ENCODE measurements at regions of chr5 and their contacts with region 1.

Region 1: DNA sequence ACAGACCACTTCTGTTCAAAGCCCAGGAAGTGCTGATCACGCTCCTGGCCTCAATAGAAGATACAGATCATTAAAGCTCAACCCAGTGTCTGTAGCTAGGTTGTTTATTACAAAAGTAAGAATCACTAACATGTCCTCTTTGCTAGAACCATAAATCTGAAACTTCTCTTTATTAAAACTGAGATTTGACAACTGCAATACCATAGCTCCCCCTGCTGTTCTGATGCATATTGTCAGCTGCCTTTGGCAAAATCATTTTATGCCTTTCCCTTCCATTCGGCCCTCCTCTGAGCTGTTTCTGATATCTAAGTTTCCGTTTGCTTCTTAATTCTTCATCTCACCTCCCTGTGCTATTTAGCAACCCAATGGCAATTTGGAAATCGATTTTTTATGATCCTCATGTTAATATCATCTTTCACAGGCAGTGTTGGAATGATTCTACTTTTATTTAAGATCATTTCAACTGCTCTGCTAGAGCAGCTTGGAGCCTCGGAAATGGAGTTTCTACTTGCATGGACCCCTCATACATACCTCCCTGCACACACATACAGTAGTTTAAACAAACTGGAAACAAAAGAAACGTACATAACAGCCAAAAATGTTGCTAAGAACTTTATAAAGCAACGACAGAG is 998.8 kb downstream of the MAT2B start:
- DNase-seq: peak; percentile 15 to 67 (median 26)
- ATAC-seq: peak; percentile 78
- H3K4me3 ChIP-seq: no peak overlapping the region
- H3K27ac ChIP-seq: no peak overlapping the region
- H3K4me1 ChIP-seq: no peaks in the 10 kb centered on the region
- H3K27me3 ChIP-seq: no peaks in the 10 kb centered on the region
- CTCF ChIP-seq: peak; percentile 61 to 88 (median 75)
- EP300 ChIP-seq: no peak
- POLR2A ChIP-seq: no peak
- RAD21 ChIP-seq: peak; percentile 95 to 96

Region 2: DNA sequence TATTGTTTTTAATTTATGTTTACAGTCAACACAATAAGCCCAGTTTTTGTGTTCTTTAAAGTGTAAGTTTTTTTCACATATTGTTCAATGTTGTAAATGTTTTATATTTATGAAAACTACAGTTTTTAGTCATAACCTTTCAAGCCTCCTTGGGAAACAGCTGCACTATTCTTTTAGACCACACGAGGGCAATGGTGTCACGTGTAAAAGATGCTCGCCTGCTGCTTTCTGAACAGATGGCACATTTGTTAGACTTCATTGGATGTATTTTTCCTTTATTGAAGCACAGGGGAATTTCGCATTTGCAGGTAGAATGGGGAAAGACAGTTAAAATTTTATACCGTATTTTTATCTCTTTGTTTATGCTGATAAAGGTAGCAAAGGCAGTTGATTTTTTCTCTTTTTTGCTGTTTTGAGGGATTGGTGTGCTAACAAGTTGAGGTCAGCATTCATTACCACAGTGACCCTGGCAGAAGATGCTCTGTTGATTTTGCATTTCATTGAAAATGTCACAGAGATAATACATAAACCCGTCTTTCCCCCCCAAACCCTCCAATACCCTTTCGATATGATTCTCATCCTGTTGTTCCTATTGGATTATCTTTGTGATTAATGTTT is 939.8 kb before region 1 on chr5:
- CTCF ChIA-PET with region 1: interaction called, 4 read pairs
- POLR2A ChIA-PET with region 1: no interaction called
- in situ Hi-C with region 1: no loop called
- intact Hi-C with region 1: loop called (anchors 2 kb)
- DNase-seq: peak; percentile 39 to 67 (median 65)
- ATAC-seq: peak; percentile 81
- H3K4me3 ChIP-seq: no peak overlapping the region
- H3K27ac ChIP-seq: no peak overlapping the region
- H3K4me1 ChIP-seq: peaks cover 0 to 3% of the 10 kb centered on the region in 2 experiments; a peak in 1 of 5 replicates
- H3K27me3 ChIP-seq: peaks cover 8 to 10% of the 10 kb centered on the region in 2 experiments; a peak in 4 of 5 replicates
- CTCF ChIP-seq: peak; percentile 65 to 86 (median 76)
- EP300 ChIP-seq: no peak
- POLR2A ChIP-seq: no peak
- RAD21 ChIP-seq: peak; percentile 68 to 85

Region 3: GRCh38 chr5:163809473-163809872 is 694.8 kb before region 1 on chr5:
- CTCF ChIA-PET with region 1: interaction called, 3 read pairs
- POLR2A ChIA-PET with region 1: no interaction called
- in situ Hi-C with region 1: loop called (anchors 25 kb)
- intact Hi-C with region 1: no loop called
- DNase-seq: no peak
- ATAC-seq: no peak
- H3K4me3 ChIP-seq: no peak overlapping the region
- H3K27ac ChIP-seq: no peak overlapping the region
- H3K4me1 ChIP-seq: no peaks in the 10 kb centered on the region
- H3K27me3 ChIP-seq: no peaks in the 10 kb centered on the region
- CTCF ChIP-seq: no peak
- EP300 ChIP-seq: no peak
- POLR2A ChIP-seq: no peak
- RAD21 ChIP-seq: no peak

Region 4: GRCh38 chr5:164027738-164028137 is 476.5 kb before region 1 on chr5:
- CTCF ChIA-PET with region 1: no interaction called
- POLR2A ChIA-PET with region 1: no interaction called
- in situ Hi-C with region 1: loop called (anchors 10 kb)
- intact Hi-C with region 1: no loop called
- DNase-seq: no peak
- ATAC-seq: no peak
- H3K4me3 ChIP-seq: no peak overlapping the region
- H3K27ac ChIP-seq: no peak overlapping the region
- H3K4me1 ChIP-seq: no peaks in the 10 kb centered on the region
- H3K27me3 ChIP-seq: no peaks in the 10 kb centered on the region
- CTCF ChIP-seq: no peak
- EP300 ChIP-seq: no peak
- POLR2A ChIP-seq: no peak
- RAD21 ChIP-seq: no peak

Region 5: DNA sequence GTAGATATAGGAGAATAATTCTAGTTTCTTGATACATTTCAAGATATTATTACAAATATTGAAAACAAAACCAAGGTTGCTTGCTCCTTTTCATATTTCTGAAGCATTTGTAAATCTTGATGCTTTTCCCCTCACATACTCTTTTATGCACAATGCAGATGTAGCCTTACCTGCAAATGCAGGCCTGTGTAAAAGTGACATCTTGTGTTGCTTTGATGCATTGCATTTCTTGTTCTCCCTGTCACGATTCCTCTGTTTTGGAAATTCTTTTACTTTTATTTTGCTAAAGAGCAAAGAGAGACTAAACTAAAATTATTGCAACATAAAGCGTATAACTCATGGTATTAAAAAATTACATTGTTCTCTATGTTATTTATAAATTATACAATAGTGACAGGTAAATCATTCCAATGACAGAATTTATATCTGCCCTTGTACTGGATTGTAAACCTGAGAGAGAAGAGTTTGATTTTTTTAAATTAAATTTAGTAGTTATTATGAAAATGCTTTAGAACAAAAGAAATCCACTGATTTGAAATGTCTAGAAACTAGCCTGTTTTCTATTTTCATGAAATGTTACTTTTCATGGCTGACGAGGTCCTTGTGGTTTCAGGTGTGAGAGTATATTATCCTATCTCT is 28.8 kb before region 1 on chr5:
- CTCF ChIA-PET with region 1: no interaction called
- POLR2A ChIA-PET with region 1: interaction called, 3 read pairs
- in situ Hi-C with region 1: no loop called
- intact Hi-C with region 1: loop called (anchors 1 kb)
- DNase-seq: peak in 2 of 4 experiments; percentile 18 to 52
- ATAC-seq: peak; percentile 84
- H3K4me3 ChIP-seq: no peak overlapping the region
- H3K27ac ChIP-seq: no peak overlapping the region
- H3K4me1 ChIP-seq: no peaks in the 10 kb centered on the region
- H3K27me3 ChIP-seq: no peaks in the 10 kb centered on the region
- CTCF ChIP-seq: peak; percentile 47 to 85 (median 61); a peak in 5 of 6 replicates
- EP300 ChIP-seq: no peak
- POLR2A ChIP-seq: no peak
- RAD21 ChIP-seq: peak; percentile 93 to 94

Measured in K562 (cell line).